ENCODE measurements at regions of chr5 and their contacts with region 1.

Region 1: DNA sequence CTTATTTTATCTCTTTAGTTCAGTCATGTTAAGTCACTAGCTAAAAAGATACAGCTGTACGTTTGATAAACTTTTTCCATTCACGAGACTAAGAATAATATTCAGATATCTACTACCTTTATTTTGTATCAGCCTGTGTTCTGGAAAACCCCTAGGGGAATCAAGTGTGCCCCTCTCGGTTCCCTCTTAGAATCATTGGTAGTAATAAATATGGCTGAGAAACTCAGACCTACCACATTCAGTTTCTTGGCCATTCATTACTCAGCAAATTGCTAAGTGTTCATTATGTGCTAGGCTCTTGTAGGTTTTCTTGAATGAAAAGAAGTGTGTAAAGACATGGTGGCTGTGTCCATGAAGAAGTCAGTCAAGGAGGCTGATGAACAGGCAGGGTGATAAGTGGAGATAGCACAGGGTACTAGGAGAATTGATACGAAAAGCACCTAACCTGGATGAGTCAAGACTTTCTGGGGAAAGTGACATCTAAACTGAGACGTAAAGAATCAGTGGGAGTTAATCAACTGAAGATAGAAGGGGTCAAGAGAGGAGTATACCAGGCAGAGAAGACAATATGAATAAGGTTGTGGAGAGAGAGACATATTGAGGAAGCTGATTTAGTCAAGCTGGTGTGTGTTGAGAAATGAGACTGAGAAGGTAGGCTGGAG is 86.2 kb downstream of the CSNK1G3 start:
- DNase-seq: no peak
- ATAC-seq: peak; percentile 21
- H3K4me3 ChIP-seq: no peak overlapping the region
- H3K4me3 Mint-ChIP-seq: no peak overlapping the region
- H3K27ac ChIP-seq: no peak overlapping the region
- H3K27ac Mint-ChIP-seq: peak overlapping the region; percentile 69
- H3K4me1 ChIP-seq: no peaks in the 10 kb centered on the region
- H3K4me1 Mint-ChIP-seq: peaks cover 12% of the 10 kb centered on the region
- H3K27me3 ChIP-seq: no peaks in the 10 kb centered on the region
- H3K27me3 Mint-ChIP-seq: no peaks in the 10 kb centered on the region
- CTCF ChIP-seq: no peak

Region 2: GRCh38 chr5:123511648-123512605 is 86.2 kb before region 1 on chr5 and contains the start of gene CSNK1G3:
- CTCF ChIA-PET with region 1: no interaction called
- POLR2A ChIA-PET with region 1: no interaction called
- intact Hi-C with region 1: loop called (anchors 5 kb)
- DNase-seq: peak; percentile 95
- ATAC-seq: peak; percentile 89
- H3K4me3 ChIP-seq: peak within 1 kb of the TSS; percentile 86 to 92 (median 89)
- H3K4me3 Mint-ChIP-seq: peak within 1 kb of the TSS; percentile 100
- H3K27ac ChIP-seq: peak within 1 kb of the TSS; percentile 89 to 90
- H3K27ac Mint-ChIP-seq: peak within 1 kb of the TSS; percentile 99
- H3K4me1 ChIP-seq: peaks cover 33 to 39% of the 10 kb centered on the region in 2 donors
- H3K4me1 Mint-ChIP-seq: peaks cover 41% of the 10 kb centered on the region
- H3K27me3 ChIP-seq: no peaks in the 10 kb centered on the region
- H3K27me3 Mint-ChIP-seq: peaks cover 3% of the 10 kb centered on the region
- CTCF ChIP-seq: no peak
- total RNA-seq, gene CSNK1G3: 140 and 148 TPM in 2 replicates

Region 3: DNA sequence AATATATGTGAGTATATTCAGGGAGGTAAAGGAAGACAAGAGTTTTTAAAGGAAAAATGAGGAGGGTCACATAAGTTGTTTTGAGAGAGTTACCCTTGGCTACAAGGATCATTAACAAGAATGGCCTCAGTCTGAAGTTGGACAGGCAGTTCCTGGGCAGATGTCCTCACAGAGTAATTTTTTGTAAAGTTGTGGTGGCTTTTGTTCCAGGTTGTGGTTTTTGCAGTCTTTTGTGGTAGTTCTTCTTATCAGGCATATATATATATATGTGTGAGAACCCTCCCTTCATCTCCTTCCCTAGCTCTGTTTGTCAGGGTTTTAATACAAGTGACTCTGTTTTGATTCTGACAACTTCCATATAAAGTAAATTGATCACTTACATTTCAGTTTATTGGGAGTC is 26.2 kb before region 1 on chr5:
- CTCF ChIA-PET with region 1: no interaction called
- POLR2A ChIA-PET with region 1: no interaction called
- intact Hi-C with region 1: no loop called
- DNase-seq: no peak
- ATAC-seq: no peak
- H3K4me3 ChIP-seq: no peak overlapping the region
- H3K4me3 Mint-ChIP-seq: no peak overlapping the region
- H3K27ac ChIP-seq: no peak overlapping the region
- H3K27ac Mint-ChIP-seq: peak overlapping the region; percentile 1
- H3K4me1 ChIP-seq: peaks cover 0 to 3% of the 10 kb centered on the region in 2 donors
- H3K4me1 Mint-ChIP-seq: peaks cover 29% of the 10 kb centered on the region
- H3K27me3 ChIP-seq: no peaks in the 10 kb centered on the region
- H3K27me3 Mint-ChIP-seq: no peaks in the 10 kb centered on the region
- CTCF ChIP-seq: no peak

Measured in B cell (primary cell).